PC-9 (cell line): ENCODE measurements at regions of chr2 and their contacts with region 1.

Region 1: GRCh38 chr2:113977660-113978523 is 88.0 kb downstream of the ACTR3 start:
- DNase-seq: peak; percentile 55 to 93
- H3K4me3 ChIP-seq: no peak overlapping the region
- H3K27ac ChIP-seq: peak overlapping the region; percentile 38
- H3K4me1 ChIP-seq: peaks cover 28% of the 10 kb centered on the region
- H3K27me3 ChIP-seq: no peaks in the 10 kb centered on the region
- CTCF ChIP-seq: peak; percentile 60

Region 2: GRCh38 chr2:114550895-114551793 is 573.3 kb after region 1 on chr2:
- CTCF ChIA-PET with region 1: no interaction called
- POLR2A ChIA-PET with region 1: no interaction called
- intact Hi-C with region 1: loop called (anchors 5 kb)
- DNase-seq: peak in 1 of 2 experiments; percentile 28
- H3K4me3 ChIP-seq: no peak overlapping the region
- H3K27ac ChIP-seq: no peak overlapping the region
- H3K4me1 ChIP-seq: no peaks in the 10 kb centered on the region
- H3K27me3 ChIP-seq: peaks cover 27% of the 10 kb centered on the region; the same call in 1 of the 2 replicates
- CTCF ChIP-seq: peak; percentile 72

Region 3: DNA sequence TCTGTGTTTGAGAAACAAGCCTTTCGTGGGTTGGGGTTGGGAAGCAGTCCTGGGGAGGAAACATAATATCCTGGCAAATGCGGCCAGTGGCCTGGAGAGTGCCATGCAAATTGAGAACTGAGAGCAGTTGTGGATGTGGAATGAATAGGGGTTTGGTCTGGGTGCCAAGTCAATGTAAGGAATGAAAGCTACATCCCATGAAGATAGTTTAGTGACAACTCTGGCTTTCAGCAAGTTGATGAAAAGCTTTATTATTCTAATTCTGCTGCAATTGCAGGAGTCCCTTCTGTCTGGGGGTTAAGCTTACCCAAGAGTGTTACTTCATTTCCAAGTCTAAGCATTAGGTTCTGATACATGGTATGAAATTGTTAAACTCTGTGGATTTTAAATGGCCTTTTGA is 1236.2 kb after region 1 on chr2:
- CTCF ChIA-PET with region 1: no interaction called
- POLR2A ChIA-PET with region 1: no interaction called
- intact Hi-C with region 1: no loop called
- DNase-seq: no peak
- H3K4me3 ChIP-seq: no peak overlapping the region
- H3K27ac ChIP-seq: no peak overlapping the region
- H3K4me1 ChIP-seq: no peaks in the 10 kb centered on the region
- H3K27me3 ChIP-seq: no peaks in the 10 kb centered on the region
- CTCF ChIP-seq: no peak